ENCODE measurements at regions of chr3 and their contacts with region 1.

Region 1: GRCh38 chr3:18428991-18429745 is 4.0 kb upstream of the SATB1 start:
- DNase-seq: no peak
- ATAC-seq: no peak
- H3K4me3 ChIP-seq: no peak overlapping the region
- H3K27ac ChIP-seq: no peak overlapping the region
- H3K4me1 ChIP-seq: peaks cover 5% of the 10 kb centered on the region; the same call in 1 of the 2 replicates
- H3K27me3 ChIP-seq: peaks cover 3 to 18% of the 10 kb centered on the region in 2 experiments; a peak in 4 of 5 replicates
- CTCF ChIP-seq: no peak
- EP300 ChIP-seq: no peak
- POLR2A ChIP-seq: no peak
- RAD21 ChIP-seq: no peak

Region 2: DNA sequence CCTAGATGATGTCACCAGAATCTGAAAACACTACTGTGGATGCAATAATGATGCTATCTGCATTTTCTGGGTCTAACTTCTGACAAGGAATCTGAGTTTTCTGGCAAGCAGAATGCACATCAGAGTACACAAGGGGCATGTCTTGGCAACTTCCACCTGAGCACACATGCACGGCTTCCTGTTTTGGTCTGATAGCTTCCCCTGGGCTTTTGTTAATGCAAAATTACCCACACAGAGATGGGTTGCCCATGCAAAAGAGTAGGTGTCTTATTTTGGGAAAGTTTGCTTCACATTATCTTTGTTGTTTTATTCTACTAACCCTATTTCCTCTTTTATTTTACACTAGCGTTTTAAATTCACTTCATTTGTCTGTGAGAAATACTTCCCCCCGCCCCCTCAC is 70.1 kb after region 1 on chr3:
- CTCF ChIA-PET with region 1: no interaction called
- POLR2A ChIA-PET with region 1: no interaction called
- in situ Hi-C with region 1: no loop called
- intact Hi-C with region 1: loop called (anchors 2 kb)
- DNase-seq: no peak
- ATAC-seq: no peak
- H3K4me3 ChIP-seq: no peak overlapping the region
- H3K27ac ChIP-seq: no peak overlapping the region
- H3K4me1 ChIP-seq: no peaks in the 10 kb centered on the region
- H3K27me3 ChIP-seq: no peaks in the 10 kb centered on the region
- CTCF ChIP-seq: no peak
- EP300 ChIP-seq: no peak
- POLR2A ChIP-seq: no peak
- RAD21 ChIP-seq: no peak